ENCODE measurements at regions of chr17 and their contacts with region 1.

Region 1: GRCh38 chr17:74379495-74380085 is 12.3 kb downstream of the GPR142 start:
- DNase-seq: peak; percentile 82
- H3K4me3 Mint-ChIP-seq: no peak overlapping the region
- H3K27ac Mint-ChIP-seq: no peak overlapping the region
- H3K4me1 Mint-ChIP-seq: no peaks in the 10 kb centered on the region
- H3K27me3 Mint-ChIP-seq: peaks cover 7% of the 10 kb centered on the region

Region 2: DNA sequence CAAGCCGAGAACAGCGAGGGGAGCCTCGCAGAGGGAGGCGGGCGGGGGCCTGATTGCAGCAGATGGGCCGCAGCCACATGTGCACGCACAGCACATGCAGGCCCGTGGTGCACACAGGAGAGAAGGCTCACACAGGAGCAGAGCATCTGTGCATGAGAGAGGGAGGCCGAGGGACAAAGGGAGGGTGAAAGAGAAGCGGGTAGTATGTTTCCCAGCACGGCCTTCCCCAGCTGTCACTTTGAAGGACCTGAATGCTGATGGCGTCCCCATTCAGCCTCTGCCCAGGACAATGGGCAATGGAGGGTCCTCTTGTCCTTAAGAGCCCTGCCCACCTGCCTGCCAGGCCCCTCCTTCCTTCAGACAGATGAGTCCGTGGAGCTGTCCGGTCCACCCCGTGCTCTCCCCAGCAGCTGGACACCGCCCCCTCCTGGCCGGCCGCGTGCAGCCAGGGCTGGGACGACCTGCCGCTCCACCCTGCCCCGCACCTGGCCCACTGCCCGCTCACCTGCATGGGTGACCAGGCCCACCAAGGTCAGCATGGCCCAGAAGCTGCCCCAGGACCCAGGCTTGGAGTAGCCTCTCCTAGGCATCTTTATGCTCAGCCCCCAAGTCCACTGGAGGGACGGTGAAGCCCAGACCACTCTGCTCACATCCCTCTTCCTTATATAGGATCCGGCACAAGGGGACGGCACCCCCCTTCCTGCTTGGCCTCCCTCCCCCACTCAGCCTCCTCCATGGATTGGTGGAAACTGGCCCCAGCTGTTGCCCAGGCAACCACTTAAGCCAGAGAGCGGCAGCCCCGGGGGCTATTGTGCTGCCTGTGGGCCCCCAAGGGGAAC is 18.1 kb before region 1 on chr17 and contains the start of gene BTBD17:
- intact Hi-C with region 1: no loop called
- DNase-seq: peak; percentile 25
- H3K4me3 Mint-ChIP-seq: no peak within 1 kb of the TSS
- H3K27ac Mint-ChIP-seq: no peak within 1 kb of the TSS
- H3K4me1 Mint-ChIP-seq: peaks cover 1% of the 10 kb centered on the region
- H3K27me3 Mint-ChIP-seq: peaks cover 18% of the 10 kb centered on the region
- total RNA-seq, gene BTBD17: not detected in 2 replicates

Region 3: DNA sequence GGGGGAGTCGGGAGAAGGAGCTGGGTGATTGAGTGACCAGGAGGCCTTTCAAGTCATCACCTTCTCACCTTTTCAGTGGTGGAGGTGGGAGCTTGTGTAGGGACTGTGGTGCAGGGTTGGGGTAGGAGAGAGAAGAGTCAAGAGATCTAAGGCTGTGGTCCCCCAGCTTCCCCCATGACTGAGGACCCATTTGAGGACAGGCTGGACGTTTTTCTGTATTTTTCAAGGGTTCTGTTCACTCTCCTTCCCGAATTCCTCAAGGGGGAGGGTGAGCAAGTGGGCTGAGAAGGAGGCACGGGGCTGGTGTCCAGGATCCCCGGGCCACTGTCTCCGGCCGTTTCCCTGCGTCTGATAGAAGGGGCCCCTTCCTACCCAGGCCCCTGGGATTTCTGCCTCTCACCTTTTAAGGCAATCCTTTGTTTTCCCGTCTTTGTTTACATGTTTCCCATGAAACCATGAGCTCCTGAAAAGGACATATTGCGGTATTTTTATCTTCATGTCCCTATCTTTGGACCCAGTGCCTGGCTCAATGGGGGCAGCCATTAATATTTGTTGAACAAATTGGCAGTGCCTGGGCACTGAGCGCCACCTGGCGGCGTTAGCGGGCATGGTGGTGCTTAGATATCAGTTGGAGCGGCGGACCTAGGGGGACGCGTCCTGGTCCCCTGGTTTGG is 77.7 kb after region 1 on chr17:
- intact Hi-C with region 1: loop called (anchors 1 kb)
- DNase-seq: peak; percentile 44
- H3K4me3 Mint-ChIP-seq: no peak overlapping the region
- H3K27ac Mint-ChIP-seq: no peak overlapping the region
- H3K4me1 Mint-ChIP-seq: peaks cover 21% of the 10 kb centered on the region
- H3K27me3 Mint-ChIP-seq: peaks cover 4% of the 10 kb centered on the region